Prostate gland (tissue), 2 donors: ENCODE measurements at regions of chr12 and their contacts with region 1.

Region 1: DNA sequence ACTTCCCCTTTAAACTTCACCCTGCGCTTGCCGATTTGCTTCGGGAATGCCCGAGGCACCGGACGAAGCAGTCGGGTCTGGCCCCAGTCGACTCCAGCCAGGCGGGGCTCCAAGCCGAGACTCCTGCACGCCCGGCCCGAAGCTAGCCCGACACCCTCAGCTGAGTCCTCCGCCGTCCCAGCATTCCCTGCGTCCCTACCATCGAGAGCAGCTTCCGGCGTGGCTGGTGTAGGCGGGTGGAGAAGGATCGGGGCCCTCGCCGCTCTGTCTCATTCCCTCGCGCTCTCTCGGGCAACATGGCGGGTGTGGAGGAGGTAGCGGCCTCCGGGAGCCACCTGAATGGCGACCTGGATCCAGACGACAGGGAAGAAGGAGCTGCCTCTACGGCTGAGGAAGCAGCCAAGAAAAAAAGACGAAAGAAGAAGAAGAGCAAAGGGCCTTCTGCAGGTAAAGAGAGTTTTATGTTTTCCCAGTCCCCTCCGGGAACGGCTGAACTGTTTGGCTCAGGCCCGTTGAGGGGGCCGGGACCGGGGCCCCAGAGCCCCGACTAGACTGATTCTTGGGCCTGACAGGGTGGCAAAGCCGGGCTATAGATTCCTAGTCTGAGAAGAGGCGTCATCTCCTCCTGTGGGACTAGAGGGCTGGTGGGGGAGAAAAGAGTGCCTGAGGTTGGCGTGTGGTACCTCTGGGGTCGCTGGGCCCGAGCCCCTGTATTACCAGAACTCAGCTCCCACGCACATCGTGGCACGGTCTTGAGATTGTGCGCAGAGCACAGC is at the start of gene METAP2:
- DNase-seq: peak; percentile 97
- H3K4me3 ChIP-seq: peak within 1 kb of the TSS; percentile 83 to 95
- H3K27ac ChIP-seq: peak within 1 kb of the TSS; percentile 86 to 92
- H3K4me1 ChIP-seq: no peaks in the 10 kb centered on the region
- H3K27me3 ChIP-seq: no peaks in the 10 kb centered on the region
- CTCF ChIP-seq: peak in 1 of 4 experiments; percentile 7
- POLR2A ChIP-seq: peak; percentile 77
- total RNA-seq, gene METAP2: 46.4 to 61.7 TPM

Region 2: DNA sequence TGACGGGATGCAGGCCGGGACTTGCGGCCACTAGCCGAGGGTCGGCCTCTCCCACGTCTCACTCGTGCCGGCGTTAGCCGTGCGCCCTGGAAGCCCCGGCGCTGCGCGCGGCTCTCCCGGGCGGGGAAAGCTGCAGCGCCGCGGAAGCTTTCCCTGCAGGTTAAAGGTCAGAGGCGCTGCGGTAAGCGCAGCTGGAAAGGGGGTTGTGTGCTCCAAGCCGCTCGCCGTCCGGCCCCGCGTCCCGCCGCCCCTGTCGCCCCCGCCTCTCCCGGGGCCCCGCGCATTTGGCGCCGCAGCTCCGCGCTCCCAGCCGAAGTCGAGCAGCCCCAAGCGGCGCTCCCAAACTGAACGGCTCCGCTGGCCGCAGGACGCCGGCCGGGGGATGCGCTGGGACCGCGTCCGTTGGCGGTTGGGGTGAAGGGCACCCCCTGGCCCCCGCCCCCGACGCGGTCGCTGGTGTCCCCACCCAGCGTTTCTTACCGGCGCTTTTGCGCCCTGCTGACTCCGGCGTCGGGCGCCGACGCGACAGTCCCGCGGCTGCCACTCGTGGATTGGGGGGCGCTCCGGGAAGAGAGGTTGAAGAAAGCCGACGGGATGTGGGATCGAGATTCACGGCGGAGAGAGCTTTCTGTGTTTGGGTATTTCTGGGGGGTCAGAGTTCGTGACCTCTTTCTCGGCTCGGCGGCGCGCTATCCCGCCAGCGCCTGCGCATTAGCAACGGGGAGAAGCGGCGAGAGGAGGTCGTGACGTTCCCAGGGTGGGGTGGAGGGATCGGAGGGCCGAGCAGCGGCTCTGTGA is 401.0 kb before region 1 on chr12 and contains the start of gene NR2C1:
- intact Hi-C with region 1: loop called (anchors 5 kb)
- DNase-seq: peak; percentile 87
- H3K4me3 ChIP-seq: peak within 1 kb of the TSS; percentile 73 to 91
- H3K27ac ChIP-seq: peak within 1 kb of the TSS; percentile 62 to 86
- H3K4me1 ChIP-seq: no peaks in the 10 kb centered on the region
- H3K27me3 ChIP-seq: no peaks in the 10 kb centered on the region
- CTCF ChIP-seq: peak in 2 of 4 experiments; percentile 33 to 90
- POLR2A ChIP-seq: peak; percentile 33
- total RNA-seq, gene NR2C1: 18.7 to 54.0 TPM

Region 3: GRCh38 chr12:95117178-95117599 is 356.9 kb before region 1 on chr12:
- intact Hi-C with region 1: loop called (anchors 5 kb)
- DNase-seq: peak; percentile 78
- H3K4me3 ChIP-seq: no peak overlapping the region
- H3K27ac ChIP-seq: peak overlapping the region; percentile 30 to 36
- H3K4me1 ChIP-seq: peaks cover 3% of the 10 kb centered on the region
- H3K27me3 ChIP-seq: no peaks in the 10 kb centered on the region
- CTCF ChIP-seq: peak; percentile 47 to 93 (median 88)
- POLR2A ChIP-seq: no peak

Region 4: DNA sequence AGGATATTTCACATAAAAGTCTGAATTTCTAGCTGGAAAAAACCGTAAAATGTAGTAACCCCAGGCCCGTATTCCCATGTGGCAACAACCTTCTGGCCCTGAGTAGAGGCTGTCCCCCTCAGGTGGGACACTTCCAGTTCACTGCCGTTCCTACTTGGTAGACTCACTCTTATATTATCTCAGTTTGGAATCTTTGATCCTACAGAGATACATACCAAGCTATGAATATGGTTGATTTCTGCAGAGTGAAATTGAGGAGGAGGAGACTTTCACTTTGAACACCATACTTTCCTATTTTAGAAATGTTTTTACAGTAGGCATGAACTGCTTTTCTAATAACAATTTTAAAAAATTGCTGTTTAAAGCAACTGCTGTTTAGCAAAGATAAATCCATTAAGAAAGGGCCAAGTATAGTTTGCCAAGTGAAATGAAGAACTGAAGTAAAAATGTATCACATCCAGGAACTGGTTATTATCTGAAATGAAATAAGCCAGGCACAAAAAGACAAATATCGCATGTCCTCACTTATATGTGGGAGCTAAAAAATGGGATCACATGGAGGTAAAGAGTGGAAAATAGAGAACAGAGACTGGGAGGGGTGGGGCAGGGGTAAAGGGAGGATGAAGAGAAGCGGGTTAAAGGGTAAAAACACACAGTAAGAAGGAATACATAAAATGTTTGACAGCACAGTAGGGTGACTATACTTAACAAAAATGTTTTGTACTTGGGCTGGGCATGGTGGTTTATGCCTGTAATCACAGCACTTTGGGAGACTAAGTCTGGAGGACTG is 92.9 kb before region 1 on chr12:
- intact Hi-C with region 1: loop called (anchors 5 kb)
- DNase-seq: no peak
- H3K4me3 ChIP-seq: no peak overlapping the region
- H3K27ac ChIP-seq: no peak overlapping the region
- H3K4me1 ChIP-seq: no peaks in the 10 kb centered on the region
- H3K27me3 ChIP-seq: no peaks in the 10 kb centered on the region
- CTCF ChIP-seq: no peak
- POLR2A ChIP-seq: no peak

Region 5: GRCh38 chr12:95532851-95533250 is 58.8 kb after region 1 on chr12:
- intact Hi-C with region 1: loop called (anchors 10 kb)
- DNase-seq: no peak
- H3K4me3 ChIP-seq: no peak overlapping the region
- H3K27ac ChIP-seq: no peak overlapping the region
- H3K4me1 ChIP-seq: no peaks in the 10 kb centered on the region
- H3K27me3 ChIP-seq: no peaks in the 10 kb centered on the region
- CTCF ChIP-seq: no peak
- POLR2A ChIP-seq: no peak

Region 6: DNA sequence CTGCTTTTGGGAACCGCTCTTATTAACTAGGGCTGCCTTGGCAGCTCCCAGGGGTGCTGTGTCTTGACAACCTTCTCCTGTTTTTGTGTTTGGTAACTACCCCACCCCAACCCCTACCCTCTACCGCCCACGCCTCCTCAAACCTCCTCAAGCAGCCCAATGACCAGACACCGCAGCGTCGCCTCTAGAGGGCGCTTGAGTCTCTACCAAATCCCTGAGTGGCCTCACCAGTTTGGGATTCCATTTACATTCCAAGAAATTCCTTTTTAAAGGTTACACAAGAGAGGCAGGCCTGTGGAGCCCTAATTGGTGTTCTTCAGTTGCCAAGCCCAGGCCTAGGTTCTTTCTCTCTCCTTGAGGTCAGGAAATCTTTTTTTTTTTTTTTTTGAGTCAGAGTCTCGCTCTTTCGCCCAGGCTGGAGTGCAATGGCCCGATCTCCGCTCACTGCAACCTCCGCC is 149.5 kb after region 1 on chr12:
- intact Hi-C with region 1: no loop called
- DNase-seq: peak; percentile 56
- H3K4me3 ChIP-seq: no peak overlapping the region
- H3K27ac ChIP-seq: no peak overlapping the region
- H3K4me1 ChIP-seq: peaks cover 7% of the 10 kb centered on the region
- H3K27me3 ChIP-seq: no peaks in the 10 kb centered on the region
- CTCF ChIP-seq: peak in 3 of 4 experiments; percentile 60 to 63 (median 62)
- POLR2A ChIP-seq: no peak